WTC11 (cell line): ENCODE measurements at regions of chr1 and their contacts with region 1.

Region 1: DNA sequence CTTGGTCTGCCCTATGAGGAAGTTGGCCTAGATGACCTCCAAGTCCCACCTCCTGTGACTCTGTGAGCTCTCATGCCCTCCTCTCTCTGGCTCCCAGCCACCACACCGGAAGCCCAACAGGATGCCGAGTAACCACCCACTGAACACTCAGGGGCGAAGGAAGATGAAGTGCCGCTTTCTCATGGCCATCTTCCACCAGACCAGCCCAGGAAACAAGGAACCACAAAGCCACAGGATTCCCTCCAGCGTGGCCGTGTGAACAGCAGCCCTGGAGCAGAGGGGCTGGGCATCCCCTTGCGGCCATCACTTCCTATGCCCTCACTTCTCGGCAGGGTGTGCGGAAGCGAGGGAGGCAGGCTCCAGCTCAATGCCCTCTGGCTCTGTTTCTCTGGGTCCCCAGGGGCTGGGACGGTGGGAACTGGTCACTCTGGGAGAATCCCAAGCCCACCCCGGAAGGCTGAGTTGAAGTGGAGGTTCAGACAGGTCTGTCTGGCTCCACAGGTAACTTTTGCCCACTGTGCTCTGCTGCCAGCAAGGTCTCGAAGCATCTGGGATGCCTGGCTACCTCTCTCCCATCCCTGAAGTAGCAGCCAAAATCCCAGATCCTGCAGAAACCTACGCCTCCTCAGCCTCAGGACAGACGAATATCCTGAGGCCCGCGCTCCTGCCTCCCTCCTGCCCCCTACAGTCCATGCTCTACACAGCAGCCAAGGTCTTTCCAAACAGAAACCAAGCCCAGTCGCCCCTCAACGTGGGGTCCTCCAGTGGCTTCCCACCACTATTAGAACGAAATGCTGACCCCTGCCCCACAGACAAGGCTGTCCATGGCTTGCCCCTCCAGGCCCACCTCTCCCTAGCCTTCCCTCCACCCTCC is 44.2 kb upstream of the ECE1 start:
- DNase-seq: peak; percentile 84
- ATAC-seq: peak; percentile 86
- H3K4me3 Mint-ChIP-seq: peak overlapping the region; percentile 59
- H3K27ac Mint-ChIP-seq: peak overlapping the region; percentile 84
- H3K4me1 Mint-ChIP-seq: peaks cover 61% of the 10 kb centered on the region
- H3K27me3 Mint-ChIP-seq: no peaks in the 10 kb centered on the region; the same call in 1 of the 2 replicates
- CTCF ChIP-seq: peak; percentile 65; the same call in 1 of the 2 replicates

Region 2: DNA sequence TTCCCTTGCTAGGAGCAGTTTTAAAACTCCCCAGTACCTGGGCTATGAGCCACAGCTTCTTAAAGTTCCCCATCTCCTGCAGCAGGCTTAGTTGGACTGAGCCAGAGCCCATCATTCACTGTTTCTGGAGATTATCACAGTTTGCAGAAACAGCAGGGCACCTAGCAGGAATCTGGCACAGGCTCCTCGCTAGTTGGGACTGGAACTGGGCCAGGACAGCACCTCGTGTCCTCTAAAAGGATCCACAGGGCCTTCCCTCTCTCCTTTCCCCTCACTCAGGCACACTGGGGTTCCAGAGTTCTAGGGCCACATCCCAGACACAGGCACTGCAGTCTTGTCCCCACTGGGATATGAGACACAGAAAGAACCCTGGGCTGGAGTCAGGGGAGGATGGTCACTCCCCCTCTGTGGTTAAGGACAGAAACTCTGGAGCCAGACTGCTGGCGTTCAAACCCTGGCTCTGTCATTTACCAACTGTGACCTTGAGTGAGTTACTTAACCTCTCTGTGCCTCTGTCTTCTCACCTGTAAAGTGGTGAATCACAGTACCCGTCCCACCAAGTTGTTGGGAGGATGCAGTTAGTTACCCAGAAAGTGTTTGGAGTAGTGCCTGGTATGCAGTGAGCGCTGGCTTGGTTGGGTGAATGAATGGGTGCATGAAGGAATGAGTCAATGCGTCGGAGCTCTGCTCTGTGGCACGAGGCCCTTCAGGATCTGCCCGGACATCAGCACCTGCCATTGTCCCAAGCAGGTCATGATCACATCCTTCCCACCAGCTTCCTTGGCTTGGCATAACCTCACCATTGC is 25.4 kb before region 1 on chr1:
- CTCF ChIA-PET with region 1: interaction called, 14 read pairs
- POLR2A ChIA-PET with region 1: no interaction called
- DNase-seq: no peak
- ATAC-seq: no peak
- H3K4me3 Mint-ChIP-seq: no peak overlapping the region
- H3K27ac Mint-ChIP-seq: peak overlapping the region; percentile 60
- H3K4me1 Mint-ChIP-seq: peaks cover 67% of the 10 kb centered on the region
- H3K27me3 Mint-ChIP-seq: no peaks in the 10 kb centered on the region
- CTCF ChIP-seq: no peak

Region 3: DNA sequence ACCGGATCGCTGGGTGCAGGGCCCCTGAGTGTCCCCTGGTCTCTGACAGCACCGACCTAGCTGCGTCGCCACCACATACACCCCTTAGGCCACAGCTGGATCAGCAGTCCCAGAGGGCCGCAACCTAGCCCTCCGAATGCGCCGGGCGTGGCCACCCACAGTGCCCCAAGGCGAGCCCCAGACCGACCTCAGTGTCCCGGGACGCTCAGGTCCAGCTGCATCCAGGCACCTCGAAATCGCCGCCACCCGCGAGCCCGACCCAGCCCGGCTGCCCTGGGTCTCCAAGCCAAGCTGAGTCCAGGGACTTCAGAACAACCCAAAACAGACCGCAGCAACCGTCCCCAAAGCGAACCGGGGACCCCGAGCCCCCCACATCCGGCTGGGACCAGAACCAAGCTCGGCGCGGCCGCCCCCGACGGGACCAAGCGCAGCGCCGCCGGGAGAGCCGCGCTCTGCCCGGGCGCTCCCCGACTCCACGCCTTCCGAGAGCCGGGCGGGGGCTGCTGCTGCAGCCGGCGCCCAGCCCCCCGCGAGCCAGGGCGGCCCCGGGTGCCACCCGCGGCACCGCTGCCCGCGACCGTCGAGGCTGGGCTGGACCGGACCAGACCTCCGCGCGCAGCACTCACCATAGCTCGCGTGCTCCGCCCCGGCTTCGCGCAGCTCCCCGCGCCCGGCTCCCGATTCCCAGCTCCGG is 10.4 kb after region 1 on chr1:
- CTCF ChIA-PET with region 1: interaction called, 16 read pairs
- POLR2A ChIA-PET with region 1: no interaction called
- DNase-seq: peak; percentile 40
- ATAC-seq: peak; percentile 17
- H3K4me3 Mint-ChIP-seq: peak overlapping the region; percentile 79
- H3K27ac Mint-ChIP-seq: no peak overlapping the region
- H3K4me1 Mint-ChIP-seq: peaks cover 19% of the 10 kb centered on the region
- H3K27me3 Mint-ChIP-seq: peaks cover 22% of the 10 kb centered on the region
- CTCF ChIP-seq: no peak

Region 4: GRCh38 chr1:21355956-21356355 is 21.5 kb after region 1 on chr1:
- CTCF ChIA-PET with region 1: no interaction called
- POLR2A ChIA-PET with region 1: no interaction called
- DNase-seq: no peak
- ATAC-seq: no peak
- H3K4me3 Mint-ChIP-seq: no peak overlapping the region
- H3K27ac Mint-ChIP-seq: no peak overlapping the region; the same call in 1 of the 2 replicates
- H3K4me1 Mint-ChIP-seq: no peaks in the 10 kb centered on the region
- H3K27me3 Mint-ChIP-seq: no peaks in the 10 kb centered on the region; the same call in 1 of the 2 replicates
- CTCF ChIP-seq: no peak

Region 5: DNA sequence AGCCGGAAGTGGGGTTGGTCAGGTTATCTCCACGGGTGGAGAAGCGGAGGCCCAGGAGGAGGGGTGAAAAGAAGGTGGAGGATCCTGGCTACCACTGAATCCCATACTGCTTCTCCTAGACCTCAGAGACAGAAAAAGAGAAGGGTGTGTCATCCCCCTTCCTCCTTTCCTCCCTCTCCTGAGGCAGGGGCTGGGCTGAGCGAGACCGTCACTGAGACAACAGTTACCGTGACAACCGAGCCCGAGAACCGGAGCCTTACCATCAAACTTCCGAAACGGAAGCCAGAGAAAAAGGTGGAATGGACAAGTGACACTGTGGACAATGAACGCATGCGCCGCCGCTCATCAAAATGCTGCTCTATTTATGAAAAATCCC is 63.4 kb after region 1 on chr1:
- CTCF ChIA-PET with region 1: no interaction called
- POLR2A ChIA-PET with region 1: no interaction called
- DNase-seq: peak; percentile 53
- ATAC-seq: peak; percentile 93
- H3K4me3 Mint-ChIP-seq: no peak overlapping the region
- H3K27ac Mint-ChIP-seq: no peak overlapping the region
- H3K4me1 Mint-ChIP-seq: peaks cover 19% of the 10 kb centered on the region
- H3K27me3 Mint-ChIP-seq: peaks cover 7% of the 10 kb centered on the region
- CTCF ChIP-seq: no peak